ENCODE measurements at regions of chr6 and their contacts with region 1.

Region 1: DNA sequence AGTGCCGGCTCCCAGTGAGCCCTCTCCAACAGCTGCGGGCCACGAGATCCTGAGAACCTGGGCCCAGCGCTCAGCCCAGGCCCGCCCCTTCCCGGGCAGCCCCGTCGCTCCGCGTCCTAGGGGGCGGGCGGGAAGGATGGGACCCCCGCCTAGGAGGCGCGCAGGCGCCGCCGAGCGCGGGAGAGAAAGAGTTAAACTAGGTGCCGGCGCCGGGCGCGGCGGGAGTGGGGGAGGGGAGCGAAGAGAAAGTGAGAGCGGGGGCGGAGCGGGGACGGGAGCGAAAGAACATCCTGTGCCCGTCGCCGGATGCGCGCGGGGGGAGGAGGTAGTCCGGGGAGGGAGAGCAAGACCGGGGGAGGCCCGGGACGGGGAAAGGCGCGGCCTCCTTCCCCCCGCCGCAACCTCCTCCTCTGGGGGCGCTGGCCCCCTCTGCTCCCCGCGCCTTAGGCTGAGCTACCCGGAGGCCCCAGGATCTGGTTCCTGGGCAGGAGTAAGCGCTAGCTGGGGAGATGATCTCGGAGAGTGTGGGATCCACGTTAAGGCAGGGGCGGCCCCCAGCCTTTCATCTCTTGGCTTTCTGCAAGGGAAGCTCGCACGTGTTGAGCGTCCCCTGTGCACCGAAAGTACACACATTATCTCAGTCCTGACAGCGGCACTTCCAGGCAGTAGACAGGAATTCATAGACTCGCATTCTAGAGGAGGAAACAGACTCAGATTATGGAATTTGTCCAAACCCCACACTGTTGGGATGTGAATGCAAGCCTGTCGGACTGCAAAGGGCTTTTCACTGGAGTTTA is 4.9 kb upstream of the ARMC12 start:
- DNase-seq: peak; percentile 79 to 99 (median 91)
- ATAC-seq: peak; percentile 73
- H3K4me3 ChIP-seq: peak overlapping the region; percentile 62 to 67
- H3K27ac ChIP-seq: peak overlapping the region; percentile 98 to 99
- H3K4me1 ChIP-seq: peaks cover 47 to 91% of the 10 kb centered on the region in 2 donors
- H3K27me3 ChIP-seq: no peaks in the 10 kb centered on the region
- CTCF ChIP-seq: no peak

Region 2: GRCh38 chr6:35522660-35523658 is 209.0 kb before region 1 on chr6:
- intact Hi-C with region 1: loop called in 1 of 2 experiments (anchors 2 kb)
- DNase-seq: peak; percentile 51 to 91 (median 73)
- ATAC-seq: peak; percentile 99
- H3K4me3 ChIP-seq: peak overlapping the region in 1 of 2 donors; percentile 13
- H3K27ac ChIP-seq: no peak overlapping the region
- H3K4me1 ChIP-seq: peaks cover 7 to 11% of the 10 kb centered on the region in 2 donors
- H3K27me3 ChIP-seq: no peaks in the 10 kb centered on the region
- CTCF ChIP-seq: peak; percentile 99

Region 3: GRCh38 chr6:35583893-35584688 is 147.8 kb before region 1 on chr6:
- intact Hi-C with region 1: loop called (anchors 5 to 10 kb)
- DNase-seq: peak in 3 of 4 donors; percentile 44 to 83 (median 67)
- ATAC-seq: peak; percentile 90
- H3K4me3 ChIP-seq: no peak overlapping the region
- H3K27ac ChIP-seq: peak overlapping the region in 1 of 2 donors; percentile 1
- H3K4me1 ChIP-seq: peaks cover 0 to 47% of the 10 kb centered on the region in 2 donors
- H3K27me3 ChIP-seq: no peaks in the 10 kb centered on the region
- CTCF ChIP-seq: peak; percentile 51 to 62

Region 4: GRCh38 chr6:35688581-35689322 is 43.2 kb before region 1 on chr6 and contains the start of gene FKBP5:
- intact Hi-C with region 1: loop called in 1 of 2 experiments (anchors 5 kb)
- DNase-seq: peak; percentile 68 to 98 (median 90)
- ATAC-seq: peak; percentile 93
- H3K4me3 ChIP-seq: peak within 1 kb of the TSS; percentile 86 to 94
- H3K27ac ChIP-seq: peak within 1 kb of the TSS; percentile 92
- H3K4me1 ChIP-seq: peaks cover 19 to 76% of the 10 kb centered on the region in 2 donors
- H3K27me3 ChIP-seq: no peaks in the 10 kb centered on the region
- CTCF ChIP-seq: no peak
- polyA plus RNA-seq, gene FKBP5: 15.6 to 22.2 (median 18.5) TPM

Region 5: GRCh38 chr6:35850208-35850607 is 118.3 kb after region 1 on chr6:
- intact Hi-C with region 1: no loop called
- DNase-seq: no peak
- ATAC-seq: no peak
- H3K4me3 ChIP-seq: no peak overlapping the region
- H3K27ac ChIP-seq: peak overlapping the region in 1 of 2 donors; percentile 75
- H3K4me1 ChIP-seq: peaks cover 0 to 9% of the 10 kb centered on the region in 2 donors
- H3K27me3 ChIP-seq: no peaks in the 10 kb centered on the region
- CTCF ChIP-seq: no peak